GM12878 (cell line): ENCODE measurements at regions of chr1 and their contacts with region 1.

Region 1: GRCh38 chr1:30379684-30380624 is 343.4 kb downstream of the MATN1 start:
- DNase-seq: peak; percentile 19
- ATAC-seq: peak; percentile 79
- H3K4me3 ChIP-seq: no peak overlapping the region
- H3K27ac ChIP-seq: no peak overlapping the region
- H3K4me1 ChIP-seq: no peaks in the 10 kb centered on the region
- H3K27me3 ChIP-seq: peaks cover 0 to 2% of the 10 kb centered on the region in 2 experiments; a peak in 1 of 4 replicates
- CTCF ChIP-seq: peak; percentile 72 to 90 (median 90)
- EP300 ChIP-seq: no peak
- POLR2A ChIP-seq: no peak
- RAD21 ChIP-seq: peak; percentile 76

Region 2: DNA sequence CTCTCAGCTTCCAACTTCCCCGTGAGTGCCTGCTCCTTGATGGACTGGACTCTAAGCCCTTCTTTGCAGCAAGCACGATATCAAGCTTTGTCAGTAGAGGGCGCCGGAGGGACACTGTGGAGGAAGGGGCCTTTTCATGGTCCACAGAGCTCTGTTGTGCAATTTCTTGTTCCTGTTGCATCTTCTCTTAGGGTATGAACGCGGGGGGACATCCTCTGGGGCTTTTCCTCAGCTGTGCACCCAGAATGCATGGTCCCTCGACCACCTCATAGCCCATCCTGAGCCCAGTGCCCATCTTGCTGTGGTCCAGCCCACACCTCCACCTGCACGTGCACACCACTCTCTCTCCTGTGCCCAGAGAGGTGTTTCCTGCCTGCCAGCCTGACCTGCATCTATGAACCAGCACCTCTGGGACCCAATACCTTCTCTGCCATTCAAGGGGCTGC is 586.8 kb before region 1 on chr1:
- CTCF ChIA-PET with region 1: interaction called, 17 read pairs
- POLR2A ChIA-PET with region 1: no interaction called
- RAD21 ChIA-PET with region 1: interaction called, 7 read pairs
- SMC1A ChIA-PET with region 1: interaction called, 6 read pairs
- in situ Hi-C with region 1: no loop called
- intact Hi-C with region 1: no loop called
- DNase-seq: no peak
- ATAC-seq: peak; percentile 86
- H3K4me3 ChIP-seq: no peak overlapping the region
- H3K27ac ChIP-seq: no peak overlapping the region
- H3K4me1 ChIP-seq: no peaks in the 10 kb centered on the region
- H3K27me3 ChIP-seq: no peaks in the 10 kb centered on the region
- CTCF ChIP-seq: peak; percentile 78 to 82 (median 80)
- EP300 ChIP-seq: no peak
- POLR2A ChIP-seq: no peak
- RAD21 ChIP-seq: peak; percentile 83

Region 3: GRCh38 chr1:30366911-30367310 is 13.0 kb before region 1 on chr1:
- CTCF ChIA-PET with region 1: interaction called, 16 read pairs
- POLR2A ChIA-PET with region 1: no interaction called
- RAD21 ChIA-PET with region 1: no interaction called
- SMC1A ChIA-PET with region 1: no interaction called
- in situ Hi-C with region 1: no loop called
- intact Hi-C with region 1: no loop called
- DNase-seq: no peak
- ATAC-seq: no peak
- H3K4me3 ChIP-seq: no peak overlapping the region
- H3K27ac ChIP-seq: no peak overlapping the region
- H3K4me1 ChIP-seq: no peaks in the 10 kb centered on the region
- H3K27me3 ChIP-seq: no peaks in the 10 kb centered on the region; a peak in 1 of 4 replicates
- CTCF ChIP-seq: no peak
- EP300 ChIP-seq: no peak
- POLR2A ChIP-seq: no peak
- RAD21 ChIP-seq: no peak

Region 4: GRCh38 chr1:30506291-30507015 is 126.5 kb after region 1 on chr1:
- CTCF ChIA-PET with region 1: no interaction called
- POLR2A ChIA-PET with region 1: no interaction called
- RAD21 ChIA-PET with region 1: no interaction called
- SMC1A ChIA-PET with region 1: no interaction called
- in situ Hi-C with region 1: no loop called
- intact Hi-C with region 1: no loop called
- DNase-seq: no peak
- ATAC-seq: no peak
- H3K4me3 ChIP-seq: no peak overlapping the region
- H3K27ac ChIP-seq: no peak overlapping the region
- H3K4me1 ChIP-seq: no peaks in the 10 kb centered on the region
- H3K27me3 ChIP-seq: no peaks in the 10 kb centered on the region; a peak in 1 of 4 replicates
- CTCF ChIP-seq: no peak
- EP300 ChIP-seq: no peak
- POLR2A ChIP-seq: no peak
- RAD21 ChIP-seq: no peak